ENCODE measurements at regions of chr4 and their contacts with region 1.

Region 1: DNA sequence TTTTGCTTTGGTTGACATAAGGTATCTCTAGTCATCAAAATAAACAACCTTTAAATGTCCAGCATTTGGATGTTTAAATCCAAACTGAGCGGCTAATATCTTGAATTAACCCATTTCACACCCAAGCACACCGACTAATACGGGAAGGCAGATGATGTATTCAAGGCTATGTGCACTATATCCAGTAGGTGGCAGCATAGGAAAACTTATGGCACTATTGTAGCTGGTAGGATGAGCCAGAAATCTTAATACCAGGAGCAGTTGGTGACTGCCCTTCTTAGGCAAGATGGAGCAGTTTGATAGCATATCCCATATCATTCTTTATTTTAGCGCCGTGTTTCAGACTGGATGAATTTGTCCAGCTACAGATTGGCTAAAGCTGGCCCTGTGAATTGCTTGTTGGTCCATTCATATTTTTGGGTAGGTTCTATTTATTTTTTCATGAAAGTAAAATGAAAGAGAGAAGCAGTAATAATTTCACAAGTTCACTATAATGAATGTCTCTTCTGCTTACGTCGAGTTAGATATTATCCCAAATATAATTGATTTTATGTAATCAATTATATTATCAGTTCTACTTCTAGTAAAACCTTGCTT is 24.4 kb downstream of the UCHL1 start:
- DNase-seq: peak; percentile 32
- ATAC-seq: peak; percentile 82
- H3K4me3 Mint-ChIP-seq: no peak overlapping the region
- H3K27ac Mint-ChIP-seq: no peak overlapping the region
- H3K4me1 Mint-ChIP-seq: no peaks in the 10 kb centered on the region
- H3K27me3 Mint-ChIP-seq: peaks cover 4% of the 10 kb centered on the region

Region 2: DNA sequence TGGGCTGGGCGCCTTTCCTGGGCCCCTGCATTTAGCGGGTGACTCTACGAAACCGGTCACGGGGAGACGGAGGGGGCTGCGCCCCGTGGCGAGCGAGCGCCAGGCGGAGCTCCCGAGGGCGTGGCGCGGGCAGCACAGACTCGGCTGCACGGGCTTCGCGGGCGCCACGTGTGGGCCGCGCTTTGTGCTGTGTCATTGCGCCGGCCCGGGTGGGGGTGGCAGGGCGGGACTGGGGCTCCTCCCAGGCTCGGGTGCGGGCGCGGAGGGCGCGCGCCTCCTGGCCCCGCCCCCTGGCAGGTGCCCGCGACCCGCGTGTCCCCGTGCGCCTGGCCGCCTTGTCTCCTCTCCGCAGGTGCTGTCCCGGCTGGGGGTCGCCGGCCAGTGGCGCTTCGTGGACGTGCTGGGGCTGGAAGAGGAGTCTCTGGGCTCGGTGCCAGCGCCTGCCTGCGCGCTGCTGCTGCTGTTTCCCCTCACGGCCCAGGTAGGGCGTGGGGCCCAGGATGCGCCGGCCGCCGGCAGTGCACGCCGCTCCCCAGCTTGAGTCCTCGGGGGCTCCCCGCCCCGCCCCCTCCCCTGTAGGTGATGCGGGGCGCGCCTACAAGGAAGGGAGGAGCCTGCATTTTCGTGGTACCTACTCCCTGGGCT is 23.8 kb before region 1 on chr4:
- CTCF ChIA-PET with region 1: interaction called, 14 read pairs
- POLR2A ChIA-PET with region 1: no interaction called
- intact Hi-C with region 1: no loop called
- DNase-seq: peak; percentile 61
- ATAC-seq: peak; percentile 75
- H3K4me3 Mint-ChIP-seq: peak overlapping the region; percentile 60
- H3K27ac Mint-ChIP-seq: no peak overlapping the region
- H3K4me1 Mint-ChIP-seq: peaks cover 6% of the 10 kb centered on the region
- H3K27me3 Mint-ChIP-seq: peaks cover 48% of the 10 kb centered on the region

Region 3: GRCh38 chr4:41644288-41644914 is 363.3 kb after region 1 on chr4:
- CTCF ChIA-PET with region 1: interaction called, 7 read pairs
- POLR2A ChIA-PET with region 1: no interaction called
- intact Hi-C with region 1: loop called in 1 of 2 experiments (anchors 1 kb)
- DNase-seq: peak; percentile 59
- ATAC-seq: peak; percentile 12
- H3K4me3 Mint-ChIP-seq: no peak overlapping the region
- H3K27ac Mint-ChIP-seq: no peak overlapping the region
- H3K4me1 Mint-ChIP-seq: no peaks in the 10 kb centered on the region
- H3K27me3 Mint-ChIP-seq: peaks cover 18% of the 10 kb centered on the region

Region 4: GRCh38 chr4:41661442-41662076 is 380.4 kb after region 1 on chr4:
- CTCF ChIA-PET with region 1: interaction called, 34 read pairs
- POLR2A ChIA-PET with region 1: no interaction called
- intact Hi-C with region 1: loop called (anchors 1 kb)
- DNase-seq: peak; percentile 66
- ATAC-seq: no peak
- H3K4me3 Mint-ChIP-seq: no peak overlapping the region
- H3K27ac Mint-ChIP-seq: no peak overlapping the region
- H3K4me1 Mint-ChIP-seq: peaks cover 6% of the 10 kb centered on the region
- H3K27me3 Mint-ChIP-seq: peaks cover 9% of the 10 kb centered on the region

Region 5: GRCh38 chr4:41882625-41883347 is 601.6 kb after region 1 on chr4:
- CTCF ChIA-PET with region 1: interaction called, 12 read pairs
- POLR2A ChIA-PET with region 1: no interaction called
- intact Hi-C with region 1: loop called in 1 of 2 experiments (anchors 2 kb)
- DNase-seq: peak; percentile 75
- ATAC-seq: peak; percentile 95
- H3K4me3 Mint-ChIP-seq: peak overlapping the region; percentile 43
- H3K27ac Mint-ChIP-seq: no peak overlapping the region
- H3K4me1 Mint-ChIP-seq: peaks cover 19% of the 10 kb centered on the region
- H3K27me3 Mint-ChIP-seq: peaks cover 47% of the 10 kb centered on the region

Region 6: GRCh38 chr4:41887821-41888686 is 606.9 kb after region 1 on chr4:
- CTCF ChIA-PET with region 1: interaction called, 12 read pairs
- POLR2A ChIA-PET with region 1: no interaction called
- intact Hi-C with region 1: loop called (anchors 1 to 2 kb)
- DNase-seq: peak; percentile 64
- ATAC-seq: no peak
- H3K4me3 Mint-ChIP-seq: no peak overlapping the region
- H3K27ac Mint-ChIP-seq: no peak overlapping the region
- H3K4me1 Mint-ChIP-seq: no peaks in the 10 kb centered on the region
- H3K27me3 Mint-ChIP-seq: peaks cover 16% of the 10 kb centered on the region

Region 7: DNA sequence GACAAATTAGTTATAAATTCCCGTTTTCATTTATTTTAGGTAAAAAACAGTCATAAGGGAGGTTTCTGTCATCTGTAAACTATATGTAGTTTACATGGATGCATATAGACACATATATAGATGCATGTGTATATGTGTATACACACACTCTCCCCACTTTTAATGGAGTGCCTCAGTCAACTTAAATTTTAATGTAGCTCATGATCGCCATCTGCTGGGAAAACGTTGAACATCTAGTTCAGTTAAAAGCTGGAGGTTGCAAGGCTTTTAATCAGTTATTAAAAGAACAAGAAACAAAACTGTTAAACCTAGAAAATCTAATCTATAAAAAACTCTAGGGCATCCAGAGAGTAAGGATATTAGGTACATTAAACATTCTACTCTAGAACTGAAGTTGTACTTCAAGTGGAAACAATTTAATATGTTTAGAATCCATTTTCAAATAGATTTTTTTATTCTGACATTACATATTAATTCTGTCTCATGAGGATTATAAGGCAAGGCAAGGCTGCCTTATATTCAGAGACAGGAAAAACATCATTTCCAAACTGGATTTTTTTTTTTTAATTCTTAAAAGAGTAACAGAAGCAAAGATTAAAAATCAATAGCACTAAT is 1238.8 kb after region 1 on chr4:
- CTCF ChIA-PET with region 1: no interaction called
- POLR2A ChIA-PET with region 1: no interaction called
- intact Hi-C with region 1: loop called in 1 of 2 experiments (anchors 5 kb)
- DNase-seq: peak; percentile 65
- ATAC-seq: peak; percentile 49
- H3K4me3 Mint-ChIP-seq: no peak overlapping the region
- H3K27ac Mint-ChIP-seq: no peak overlapping the region
- H3K4me1 Mint-ChIP-seq: peaks cover 2% of the 10 kb centered on the region
- H3K27me3 Mint-ChIP-seq: no peaks in the 10 kb centered on the region